Naive thymus-derived CD8-positive, alpha-beta T cell (primary cell): ENCODE measurements at regions of chr9 and their contacts with region 1.

Region 1: DNA sequence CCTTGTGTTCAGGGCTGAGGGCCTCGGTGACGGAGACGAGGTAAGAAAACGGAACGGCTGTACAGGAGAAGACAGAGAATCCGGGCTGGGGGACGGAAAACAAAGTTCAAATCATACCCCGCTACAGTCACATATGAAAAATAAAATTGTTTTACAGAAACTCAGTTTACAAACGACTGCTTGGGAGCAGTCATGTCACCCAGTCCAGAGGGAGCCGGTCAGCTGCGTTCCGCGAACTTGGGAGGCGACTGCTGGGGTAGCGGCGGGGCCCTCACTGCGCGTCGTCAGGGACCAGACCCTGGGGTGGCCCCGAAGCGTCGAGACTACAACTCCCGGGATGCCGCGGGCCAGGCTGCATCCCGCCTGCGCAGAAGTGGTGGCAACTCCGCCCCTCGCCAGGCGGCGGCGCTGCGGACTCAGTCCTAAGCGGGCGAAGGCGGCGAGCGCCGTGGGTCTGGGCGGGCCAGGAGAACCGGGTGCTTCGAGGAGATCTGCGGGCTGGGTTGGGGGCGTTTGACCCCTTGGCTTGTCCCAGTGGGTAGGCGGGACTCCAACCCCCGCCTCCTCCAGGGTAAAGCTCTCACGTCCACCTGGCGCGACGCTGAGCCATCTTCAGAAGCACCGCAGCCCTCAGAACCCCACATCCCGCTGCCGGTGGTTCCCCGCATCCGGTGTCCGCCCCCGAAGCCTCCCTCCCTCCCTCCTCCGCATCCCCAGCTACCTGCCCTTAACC is 4.0 kb downstream of the SIT1 start:
- DNase-seq: peak; percentile 83 to 96 (median 92)
- ATAC-seq: peak; percentile 81 to 83
- H3K4me3 Mint-ChIP-seq: peak overlapping the region; percentile 89 to 98 (median 96)
- H3K27ac Mint-ChIP-seq: peak overlapping the region; percentile 95 to 98 (median 96)
- H3K4me1 Mint-ChIP-seq: peaks cover 32 to 85% (median 55%) of the 10 kb centered on the region in 4 donors
- H3K27me3 Mint-ChIP-seq: no peaks in the 10 kb centered on the region

Region 2: DNA sequence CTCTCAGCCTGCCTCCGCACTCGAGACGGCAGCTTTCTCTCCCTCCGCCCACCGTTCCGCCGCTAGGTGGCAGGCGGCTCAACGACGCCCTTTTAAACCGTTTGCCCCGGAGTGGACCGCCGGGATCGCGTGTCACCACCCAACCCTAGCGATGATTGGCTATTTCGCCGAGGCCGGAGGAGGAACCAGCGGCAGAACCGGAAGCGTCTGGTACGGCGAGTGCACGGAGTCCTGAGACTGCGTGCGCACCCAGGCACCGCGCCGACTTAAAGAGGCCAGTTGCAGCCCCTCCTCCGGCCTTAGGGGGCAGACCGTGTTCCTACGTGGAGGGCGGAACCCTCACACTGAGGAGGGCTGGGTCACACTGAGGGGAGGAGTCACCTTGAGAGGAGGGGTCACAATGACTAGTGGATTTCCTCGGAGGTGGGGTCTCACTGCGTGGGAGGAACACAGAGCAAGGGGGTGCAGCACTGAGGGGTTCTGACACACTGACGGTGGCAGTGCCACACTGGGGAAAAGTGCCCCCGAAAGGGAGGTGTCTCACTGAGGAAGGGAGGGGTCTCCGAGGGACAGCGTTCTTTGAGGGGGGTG is 42.6 kb before region 1 on chr9:
- POLR2A ChIA-PET with region 1: interaction called, 40 read pairs
- DNase-seq: peak; percentile 94 to 100 (median 99)
- ATAC-seq: peak; percentile 83 to 87
- H3K4me3 Mint-ChIP-seq: peak overlapping the region; percentile 92 to 99 (median 96)
- H3K27ac Mint-ChIP-seq: peak overlapping the region; percentile 93 to 99 (median 98)
- H3K4me1 Mint-ChIP-seq: peaks cover 26 to 40% (median 34%) of the 10 kb centered on the region in 4 donors
- H3K27me3 Mint-ChIP-seq: no peaks in the 10 kb centered on the region

Region 3: GRCh38 chr9:35636135-35636876 is 10.4 kb before region 1 on chr9:
- POLR2A ChIA-PET with region 1: interaction called, 10 read pairs
- DNase-seq: no peak
- ATAC-seq: no peak
- H3K4me3 Mint-ChIP-seq: peak overlapping the region in 4 of 10 donors; percentile 8 to 59 (median 30)
- H3K27ac Mint-ChIP-seq: peak overlapping the region in 6 of 10 donors; percentile 57 to 92 (median 76)
- H3K4me1 Mint-ChIP-seq: peaks cover 21 to 75% (median 52%) of the 10 kb centered on the region in 4 donors
- H3K27me3 Mint-ChIP-seq: no peaks in the 10 kb centered on the region

Region 4: GRCh38 chr9:35664531-35665470 is 18.1 kb after region 1 on chr9 and contains the start of gene ARHGEF39:
- POLR2A ChIA-PET with region 1: interaction called, 180 read pairs
- DNase-seq: peak; percentile 34 to 76 (median 58)
- ATAC-seq: peak; percentile 79 to 83
- H3K4me3 Mint-ChIP-seq: peak within 1 kb of the TSS; percentile 75 to 89 (median 84)
- H3K27ac Mint-ChIP-seq: peak within 1 kb of the TSS; percentile 57 to 99 (median 82)
- H3K4me1 Mint-ChIP-seq: peaks cover 32 to 65% (median 62%) of the 10 kb centered on the region in 4 donors
- H3K27me3 Mint-ChIP-seq: peaks cover 0 to 2% (median 0%) of the 10 kb centered on the region in 5 donors
- polyA plus RNA-seq, gene ARHGEF39: 0.13 to 0.25 (median 0.24) TPM

Region 5: GRCh38 chr9:35696525-35697215 is 50.0 kb after region 1 on chr9:
- POLR2A ChIA-PET with region 1: interaction called, 14 read pairs
- DNase-seq: peak; percentile 22 to 73 (median 50)
- ATAC-seq: peak; percentile 86 to 97
- H3K4me3 Mint-ChIP-seq: peak overlapping the region in 1 of 10 donors; percentile 62
- H3K27ac Mint-ChIP-seq: peak overlapping the region in 7 of 10 donors; percentile 20 to 83 (median 64)
- H3K4me1 Mint-ChIP-seq: peaks cover 9 to 14% (median 11%) of the 10 kb centered on the region in 4 donors
- H3K27me3 Mint-ChIP-seq: no peaks in the 10 kb centered on the region